Activated CD4-positive, alpha-beta memory T cell treated with anti-CD3 and anti-CD28 coated beads for 36 hours (primary cell): ENCODE measurements at regions of chr20 and their contacts with region 1.

Region 1: GRCh38 chr20:35741892-35742740 is at the start of gene RBM39:
- DNase-seq: peak; percentile 100
- H3K4me3 Mint-ChIP-seq: peak within 1 kb of the TSS; percentile 96
- H3K27ac Mint-ChIP-seq: peak within 1 kb of the TSS; percentile 98
- H3K4me1 Mint-ChIP-seq: peaks cover 38% of the 10 kb centered on the region
- H3K27me3 Mint-ChIP-seq: peaks cover 2% of the 10 kb centered on the region
- total RNA-seq, gene RBM39: 243 to 259 TPM

Region 2: GRCh38 chr20:35454881-35455609 is 287.1 kb before region 1 on chr20 and contains the start of gene CEP250:
- CTCF ChIA-PET with region 1: no interaction called
- POLR2A ChIA-PET with region 1: interaction called, 8 read pairs
- intact Hi-C with region 1: loop called (anchors 1 kb)
- DNase-seq: peak; percentile 95
- H3K4me3 Mint-ChIP-seq: peak within 1 kb of the TSS; percentile 88
- H3K27ac Mint-ChIP-seq: peak within 1 kb of the TSS; percentile 97
- H3K4me1 Mint-ChIP-seq: peaks cover 28% of the 10 kb centered on the region
- H3K27me3 Mint-ChIP-seq: no peaks in the 10 kb centered on the region
- total RNA-seq, gene CEP250: 47.2 to 60.8 TPM

Region 3: DNA sequence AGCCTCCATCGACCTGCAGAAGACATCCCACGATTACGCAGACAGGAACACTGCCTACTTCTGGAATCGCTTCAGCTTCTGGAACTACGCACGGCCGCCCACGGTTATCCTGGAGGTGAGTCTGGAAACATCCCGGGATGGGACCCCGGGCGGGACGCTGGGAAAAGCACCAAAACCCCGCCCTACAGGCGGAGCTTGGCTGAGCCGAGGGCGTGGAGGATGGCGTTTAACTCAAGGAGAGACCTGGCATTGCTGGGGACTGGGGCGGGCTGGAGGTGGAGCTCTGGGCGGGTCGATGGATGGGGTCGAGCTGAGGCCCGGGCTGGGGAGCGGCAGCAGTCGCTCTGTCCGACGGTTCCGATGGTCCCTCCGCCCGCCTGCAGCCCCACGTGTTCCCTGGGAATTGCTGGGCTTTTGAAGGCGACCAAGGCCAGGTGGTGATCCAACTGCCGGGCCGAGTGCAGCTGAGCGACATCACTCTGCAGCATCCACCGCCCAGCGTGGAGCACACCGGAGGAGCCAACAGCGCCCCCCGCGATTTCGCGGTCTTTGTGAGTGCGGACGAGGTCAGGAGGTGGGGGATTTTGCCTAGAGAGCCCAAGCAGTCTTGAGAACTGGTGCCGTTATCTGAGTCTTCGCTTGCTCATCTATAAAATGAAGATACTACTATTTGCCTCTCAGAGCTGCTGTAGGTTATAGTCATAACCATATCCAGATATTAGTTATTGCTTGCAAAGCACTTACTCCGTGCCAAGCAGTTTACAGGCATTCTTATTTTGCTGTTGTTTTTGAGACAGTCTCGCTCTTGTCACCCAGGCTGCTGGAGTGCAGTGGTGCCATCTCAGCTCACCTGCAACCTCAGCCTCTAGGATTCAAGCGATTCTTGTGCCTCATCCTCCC is 122.7 kb before region 1 on chr20:
- CTCF ChIA-PET with region 1: interaction called, 5 read pairs
- POLR2A ChIA-PET with region 1: interaction called, 19 read pairs
- intact Hi-C with region 1: loop called (anchors 1 kb)
- DNase-seq: peak; percentile 94
- H3K4me3 Mint-ChIP-seq: peak overlapping the region; percentile 83
- H3K27ac Mint-ChIP-seq: peak overlapping the region; percentile 90
- H3K4me1 Mint-ChIP-seq: peaks cover 45% of the 10 kb centered on the region
- H3K27me3 Mint-ChIP-seq: peaks cover 2% of the 10 kb centered on the region

Region 4: DNA sequence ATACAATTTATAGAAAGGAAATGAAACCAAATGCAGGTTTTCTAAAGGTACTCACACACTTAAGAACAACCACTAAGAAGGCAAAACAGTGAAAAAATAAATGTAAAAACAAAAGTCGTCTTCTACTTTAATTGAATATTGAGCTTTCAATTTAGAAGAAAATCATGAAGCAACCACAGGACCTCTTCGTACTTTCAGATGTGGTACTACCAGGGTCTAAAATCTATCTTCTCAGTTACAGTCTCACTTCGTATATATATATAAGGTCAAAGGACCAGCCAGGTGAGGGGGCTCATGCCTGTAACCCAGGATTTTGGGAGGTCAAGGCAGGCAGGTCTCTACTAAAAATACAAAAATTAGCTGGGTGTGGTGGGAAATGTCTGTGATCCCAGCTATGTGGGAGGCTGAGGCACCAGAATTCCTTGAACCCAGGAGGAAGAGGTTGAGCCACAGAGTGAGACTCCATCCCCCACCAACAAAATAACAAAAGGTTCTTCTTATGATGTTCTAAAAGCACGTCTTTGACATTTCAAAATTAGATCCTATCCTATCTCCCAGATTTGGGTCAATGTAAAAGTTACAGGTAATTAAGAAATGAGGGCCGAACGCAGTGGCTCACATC is 30.4 kb before region 1 on chr20:
- CTCF ChIA-PET with region 1: interaction called, 7 read pairs
- POLR2A ChIA-PET with region 1: interaction called, 9 read pairs
- intact Hi-C with region 1: loop called (anchors 2 kb)
- DNase-seq: no peak
- H3K4me3 Mint-ChIP-seq: peak overlapping the region; percentile 28
- H3K27ac Mint-ChIP-seq: peak overlapping the region; percentile 83
- H3K4me1 Mint-ChIP-seq: peaks cover 56% of the 10 kb centered on the region
- H3K27me3 Mint-ChIP-seq: no peaks in the 10 kb centered on the region

Region 5: GRCh38 chr20:35771689-35772562 is 29.8 kb after region 1 on chr20 and contains the start of gene PHF20:
- CTCF ChIA-PET with region 1: interaction called, 20 read pairs
- POLR2A ChIA-PET with region 1: interaction called, 154 read pairs
- intact Hi-C with region 1: loop called (anchors 1 kb)
- DNase-seq: peak; percentile 100
- H3K4me3 Mint-ChIP-seq: peak within 1 kb of the TSS; percentile 82
- H3K27ac Mint-ChIP-seq: peak within 1 kb of the TSS; percentile 85
- H3K4me1 Mint-ChIP-seq: peaks cover 64% of the 10 kb centered on the region
- H3K27me3 Mint-ChIP-seq: no peaks in the 10 kb centered on the region
- total RNA-seq, gene PHF20: 49.1 to 50.5 TPM

Region 6: GRCh38 chr20:35917077-35917476 is 175.0 kb after region 1 on chr20:
- CTCF ChIA-PET with region 1: no interaction called
- POLR2A ChIA-PET with region 1: no interaction called
- intact Hi-C with region 1: no loop called
- DNase-seq: no peak
- H3K4me3 Mint-ChIP-seq: no peak overlapping the region
- H3K27ac Mint-ChIP-seq: no peak overlapping the region
- H3K4me1 Mint-ChIP-seq: no peaks in the 10 kb centered on the region
- H3K27me3 Mint-ChIP-seq: no peaks in the 10 kb centered on the region

Region 7: DNA sequence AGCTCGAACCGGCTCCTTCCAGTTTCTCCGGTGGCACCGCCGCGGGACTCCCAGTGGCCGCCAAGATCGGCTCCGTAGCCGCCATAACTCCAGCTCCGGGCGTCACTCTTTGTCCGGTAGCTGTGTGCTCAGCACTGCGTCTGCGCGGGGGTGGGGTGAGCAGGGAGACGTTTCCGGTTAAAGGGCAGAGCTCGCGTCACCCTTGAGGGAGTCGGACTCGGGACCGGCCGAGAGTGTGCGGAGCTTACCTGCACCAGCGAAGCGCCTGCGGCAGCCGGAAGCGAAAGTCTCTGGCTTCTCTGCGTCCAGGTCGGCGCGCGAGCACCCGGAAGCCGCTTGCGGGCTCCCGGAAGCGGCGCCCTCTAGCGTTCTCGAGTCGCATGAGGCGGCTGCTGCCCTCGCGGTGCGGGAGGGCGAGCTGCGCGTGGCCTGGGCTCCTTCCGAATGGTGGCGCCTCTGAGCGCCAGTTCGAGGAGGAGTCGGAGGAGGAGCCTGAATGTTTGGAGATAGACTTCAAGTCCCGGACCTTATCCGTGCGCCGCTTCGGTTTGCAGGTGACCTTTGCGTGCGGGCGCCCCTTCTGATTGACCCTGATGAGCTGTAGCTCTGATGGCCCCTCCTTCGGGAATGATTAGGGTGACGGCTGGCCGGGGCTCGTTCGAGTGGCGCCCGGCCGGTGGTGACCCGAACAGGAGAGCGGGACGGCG is 212.2 kb after region 1 on chr20 and contains the start of gene SCAND1:
- CTCF ChIA-PET with region 1: interaction called, 23 read pairs
- POLR2A ChIA-PET with region 1: interaction called, 55 read pairs
- intact Hi-C with region 1: loop called (anchors 1 kb)
- DNase-seq: peak; percentile 98
- H3K4me3 Mint-ChIP-seq: peak within 1 kb of the TSS; percentile 100
- H3K27ac Mint-ChIP-seq: peak within 1 kb of the TSS; percentile 99
- H3K4me1 Mint-ChIP-seq: peaks cover 14% of the 10 kb centered on the region
- H3K27me3 Mint-ChIP-seq: no peaks in the 10 kb centered on the region
- total RNA-seq, gene SCAND1: 45.4 to 51.3 TPM